Testis (tissue), 5 donors: ENCODE measurements at regions of chr5 and their contacts with region 1.

Region 1: DNA sequence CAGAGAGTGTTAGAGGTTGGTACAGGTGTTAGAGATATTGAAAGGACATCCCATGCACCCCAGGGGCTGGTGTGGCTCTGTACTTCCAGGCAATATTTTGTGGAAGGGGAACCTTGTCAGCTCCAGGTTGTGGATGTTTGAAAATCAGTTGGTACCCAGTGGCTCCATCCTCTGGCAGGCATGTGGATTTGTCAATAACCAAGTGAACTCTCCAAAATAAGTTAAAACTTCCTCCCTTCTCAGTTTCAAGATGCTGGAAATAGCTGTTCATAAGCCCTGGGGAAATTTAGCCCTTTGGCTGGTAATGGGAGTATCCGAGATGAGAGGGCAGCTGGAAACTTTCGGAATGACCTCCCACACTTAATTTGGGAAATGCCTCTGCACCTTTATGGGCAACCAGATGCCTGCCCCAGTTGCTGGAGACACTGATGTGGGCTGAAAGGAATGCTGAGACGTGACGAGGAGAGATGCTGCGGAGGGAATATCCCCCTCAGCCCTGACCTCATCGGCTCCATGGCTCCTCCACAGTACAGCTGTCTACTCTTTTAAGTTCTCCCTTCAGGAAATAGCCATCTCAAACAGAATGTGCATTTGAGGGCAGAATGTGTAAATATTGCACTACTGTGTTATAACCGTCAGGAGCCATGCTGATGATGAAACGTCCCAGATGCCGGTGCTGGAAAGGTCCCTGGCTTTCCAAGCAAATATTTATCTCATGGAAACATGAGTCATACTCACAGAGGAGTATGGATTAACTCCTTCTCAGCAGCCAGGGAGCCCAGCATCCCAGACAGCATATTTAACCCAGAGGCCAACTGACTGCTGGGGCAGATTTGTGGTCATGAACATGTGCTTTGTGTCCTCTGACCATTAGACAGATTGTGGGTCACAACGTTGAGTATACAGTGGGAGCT is 29.5 kb downstream of the TGFBI start:
- DNase-seq: no peak
- H3K4me3 ChIP-seq: no peak overlapping the region
- H3K27ac ChIP-seq: no peak overlapping the region
- H3K4me1 ChIP-seq: peaks cover 11% of the 10 kb centered on the region
- H3K27me3 ChIP-seq: no peaks in the 10 kb centered on the region
- CTCF ChIP-seq: peak in 1 of 3 experiments; percentile 45
- POLR2A ChIP-seq: no peak

Region 2: GRCh38 chr5:135950611-135951010 is 107.7 kb before region 1 on chr5:
- intact Hi-C with region 1: loop called (anchors 10 kb)
- DNase-seq: no peak
- H3K4me3 ChIP-seq: no peak overlapping the region
- H3K27ac ChIP-seq: no peak overlapping the region
- H3K4me1 ChIP-seq: no peaks in the 10 kb centered on the region
- H3K27me3 ChIP-seq: no peaks in the 10 kb centered on the region
- CTCF ChIP-seq: no peak
- POLR2A ChIP-seq: no peak

Region 3: DNA sequence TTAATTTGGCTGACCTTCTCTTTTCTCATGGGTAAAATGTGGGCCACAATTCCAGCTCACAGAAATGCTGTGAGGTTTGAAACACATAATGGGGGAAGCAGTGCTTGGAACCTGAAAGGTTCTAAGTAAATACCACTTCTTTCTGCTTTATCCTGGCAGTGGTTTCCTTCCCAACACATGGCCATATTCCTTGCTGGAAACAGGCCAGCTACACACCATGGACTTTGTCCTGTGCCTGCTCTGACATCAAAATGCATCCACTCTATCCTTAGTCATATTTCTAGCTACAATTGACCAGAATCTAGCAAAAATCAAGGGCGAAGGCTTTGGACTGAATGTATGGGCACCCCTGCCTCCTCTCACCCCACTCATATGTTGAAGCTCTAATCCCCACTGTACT is 400.2 kb after region 1 on chr5:
- intact Hi-C with region 1: no loop called
- DNase-seq: no peak
- H3K4me3 ChIP-seq: no peak overlapping the region
- H3K27ac ChIP-seq: no peak overlapping the region
- H3K4me1 ChIP-seq: no peaks in the 10 kb centered on the region
- H3K27me3 ChIP-seq: no peaks in the 10 kb centered on the region
- CTCF ChIP-seq: no peak
- POLR2A ChIP-seq: no peak

Region 4: GRCh38 chr5:137016783-137017338 is 958.6 kb after region 1 on chr5:
- intact Hi-C with region 1: no loop called
- DNase-seq: no peak
- H3K4me3 ChIP-seq: no peak overlapping the region
- H3K27ac ChIP-seq: no peak overlapping the region
- H3K4me1 ChIP-seq: no peaks in the 10 kb centered on the region
- H3K27me3 ChIP-seq: no peaks in the 10 kb centered on the region
- CTCF ChIP-seq: no peak
- POLR2A ChIP-seq: no peak